ENCODE measurements at regions of chr11 and their contacts with region 1.

Region 1: DNA sequence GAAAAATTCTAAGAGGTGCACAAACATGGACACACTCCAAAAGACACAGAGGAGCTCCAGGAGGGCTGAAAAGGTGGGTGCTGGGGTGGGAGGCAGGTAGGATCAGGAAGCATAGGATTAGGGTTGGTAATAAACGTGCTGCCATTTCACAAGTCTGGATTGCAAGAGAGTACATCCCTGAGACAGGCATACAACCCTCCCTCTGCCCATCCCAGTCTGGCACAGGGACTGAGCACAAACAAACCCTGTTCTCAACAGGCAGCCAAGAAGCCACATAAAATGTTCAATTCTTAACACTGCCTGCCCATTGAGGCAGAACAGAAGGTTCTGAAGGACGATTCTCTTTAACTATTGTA is 18.5 kb downstream of the SLC35F2 start:
- DNase-seq: no peak
- ATAC-seq: no peak
- H3K4me3 ChIP-seq: no peak overlapping the region
- H3K4me3 Mint-ChIP-seq: peak overlapping the region in 2 of 10 donors; percentile 46 to 76
- H3K27ac ChIP-seq: no peak overlapping the region
- H3K27ac Mint-ChIP-seq: peak overlapping the region in 3 of 9 donors; percentile 21 to 85 (median 85)
- H3K4me1 ChIP-seq: peaks cover 0 to 7% of the 10 kb centered on the region in 2 donors
- H3K4me1 Mint-ChIP-seq: peaks cover 9 to 31% (median 14%) of the 10 kb centered on the region in 7 donors
- H3K27me3 ChIP-seq: no peaks in the 10 kb centered on the region
- H3K27me3 Mint-ChIP-seq: no peaks in the 10 kb centered on the region

Region 2: DNA sequence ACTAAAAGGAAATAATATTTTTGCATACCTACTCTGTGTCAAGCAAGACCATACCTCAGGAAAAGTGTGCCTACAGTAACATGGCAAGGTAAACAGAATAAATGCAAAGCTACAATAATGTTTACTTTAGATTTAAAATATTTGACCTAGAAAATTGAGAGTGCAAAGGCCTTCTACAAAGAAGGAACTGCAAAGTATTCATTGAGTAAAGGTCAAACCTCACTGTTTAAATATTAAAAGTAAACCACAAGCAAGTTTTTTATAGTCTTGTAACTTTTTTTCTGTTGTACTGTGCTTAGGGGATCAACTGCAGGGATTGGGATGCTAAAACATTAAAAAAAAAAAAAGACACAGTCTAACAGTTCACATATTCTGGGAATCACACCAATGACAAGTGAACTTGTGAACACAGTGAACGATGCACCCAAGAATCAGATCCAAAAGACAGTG is 431.3 kb before region 1 on chr11:
- CTCF ChIA-PET with region 1: no interaction called
- POLR2A ChIA-PET with region 1: no interaction called
- intact Hi-C with region 1: no loop called
- DNase-seq: no peak
- ATAC-seq: no peak
- H3K4me3 ChIP-seq: no peak overlapping the region
- H3K4me3 Mint-ChIP-seq: no peak overlapping the region
- H3K27ac ChIP-seq: no peak overlapping the region
- H3K27ac Mint-ChIP-seq: no peak overlapping the region
- H3K4me1 ChIP-seq: no peaks in the 10 kb centered on the region
- H3K4me1 Mint-ChIP-seq: peaks cover 0 to 5% (median 0%) of the 10 kb centered on the region in 7 donors
- H3K27me3 ChIP-seq: no peaks in the 10 kb centered on the region
- H3K27me3 Mint-ChIP-seq: no peaks in the 10 kb centered on the region

Region 3: GRCh38 chr11:107858217-107859070 is 18.3 kb after region 1 on chr11 and contains the start of gene SLC35F2:
- CTCF ChIA-PET with region 1: no interaction called
- POLR2A ChIA-PET with region 1: interaction called, 3 read pairs
- intact Hi-C with region 1: loop called (anchors 1 kb)
- DNase-seq: peak; percentile 15 to 81 (median 45)
- ATAC-seq: peak; percentile 88
- H3K4me3 ChIP-seq: peak within 1 kb of the TSS; percentile 88
- H3K4me3 Mint-ChIP-seq: peak within 1 kb of the TSS; percentile 89 to 98 (median 95)
- H3K27ac ChIP-seq: peak within 1 kb of the TSS; percentile 65
- H3K27ac Mint-ChIP-seq: peak within 1 kb of the TSS; percentile 21 to 88 (median 77)
- H3K4me1 ChIP-seq: no peaks in the 10 kb centered on the region
- H3K4me1 Mint-ChIP-seq: peaks cover 5 to 33% (median 26%) of the 10 kb centered on the region in 7 donors
- H3K27me3 ChIP-seq: no peaks in the 10 kb centered on the region
- H3K27me3 Mint-ChIP-seq: peaks cover 0 to 17% (median 4%) of the 10 kb centered on the region in 5 donors
- total RNA-seq, gene SLC35F2: 3.8 to 8.9 (median 4.5) TPM

Region 4: DNA sequence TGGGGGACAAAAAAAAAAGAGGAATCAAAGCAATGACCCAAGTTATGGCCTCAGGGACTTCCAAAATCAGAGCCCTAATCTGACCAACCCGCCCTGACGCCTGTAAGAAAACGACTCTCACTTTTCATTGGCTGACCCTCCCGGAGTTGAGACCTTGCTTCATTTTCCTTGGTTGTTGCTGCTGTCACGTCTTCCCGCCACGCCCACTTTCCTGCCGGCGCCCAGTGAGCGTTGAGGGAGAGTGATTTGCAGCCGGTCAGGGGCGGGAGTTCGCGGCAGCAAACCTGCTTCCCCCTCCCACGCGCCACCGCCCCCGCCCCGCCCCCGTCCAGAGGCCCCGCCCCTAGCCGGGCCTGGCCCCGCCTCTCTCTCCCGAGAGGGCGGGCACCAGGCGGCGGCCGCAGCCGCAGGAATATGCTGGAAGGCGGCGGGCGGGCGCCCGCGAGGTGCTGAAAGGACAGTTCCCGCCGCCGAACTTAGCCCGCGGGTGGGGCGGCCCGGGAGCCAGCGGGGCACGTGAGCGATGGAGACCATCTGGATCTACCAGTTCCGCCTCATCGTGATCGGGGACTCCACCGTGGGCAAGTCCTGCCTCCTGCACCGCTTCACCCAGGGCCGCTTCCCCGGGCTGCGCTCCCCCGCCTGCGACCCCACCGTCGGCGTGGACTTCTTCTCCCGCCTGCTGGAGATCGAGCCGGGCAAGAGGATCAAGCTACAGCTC is 88.1 kb after region 1 on chr11 and contains the start of gene RAB39A:
- CTCF ChIA-PET with region 1: no interaction called
- POLR2A ChIA-PET with region 1: no interaction called
- intact Hi-C with region 1: loop called in 1 of 2 experiments (anchors 5 kb)
- DNase-seq: peak in 8 of 9 donors; percentile 25 to 73 (median 35)
- ATAC-seq: peak; percentile 92
- H3K4me3 ChIP-seq: no peak within 1 kb of the TSS
- H3K4me3 Mint-ChIP-seq: peak within 1 kb of the TSS; percentile 22 to 84 (median 67)
- H3K27ac ChIP-seq: no peak within 1 kb of the TSS
- H3K27ac Mint-ChIP-seq: peak within 1 kb of the TSS in 1 of 9 donors; percentile 33
- H3K4me1 ChIP-seq: peaks cover 6 to 7% of the 10 kb centered on the region in 2 donors
- H3K4me1 Mint-ChIP-seq: peaks cover 5 to 15% (median 11%) of the 10 kb centered on the region in 7 donors
- H3K27me3 ChIP-seq: peaks cover 0 to 15% of the 10 kb centered on the region in 2 donors
- H3K27me3 Mint-ChIP-seq: peaks cover 36 to 62% (median 52%) of the 10 kb centered on the region in 5 donors
- total RNA-seq, gene RAB39A: 0.38 to 1.6 TPM in 2 of 5 experiments, not detected in the others

Region 5: GRCh38 chr11:108497317-108498045 is 657.4 kb after region 1 on chr11:
- CTCF ChIA-PET with region 1: no interaction called
- POLR2A ChIA-PET with region 1: no interaction called
- intact Hi-C with region 1: loop called in 1 of 2 experiments (anchors 5 kb)
- DNase-seq: peak in 8 of 9 donors; percentile 68 to 83 (median 76)
- ATAC-seq: peak; percentile 92
- H3K4me3 ChIP-seq: peak overlapping the region; percentile 77
- H3K4me3 Mint-ChIP-seq: peak overlapping the region; percentile 95 to 100 (median 98)
- H3K27ac ChIP-seq: peak overlapping the region; percentile 87
- H3K27ac Mint-ChIP-seq: peak overlapping the region; percentile 95 to 100 (median 99)
- H3K4me1 ChIP-seq: peaks cover 0 to 3% of the 10 kb centered on the region in 2 donors
- H3K4me1 Mint-ChIP-seq: peaks cover 8 to 33% (median 24%) of the 10 kb centered on the region in 7 donors
- H3K27me3 ChIP-seq: no peaks in the 10 kb centered on the region
- H3K27me3 Mint-ChIP-seq: no peaks in the 10 kb centered on the region